Posterior vena cava (tissue), 2 donors: ENCODE measurements at regions of chr10 and their contacts with region 1.

Region 1: DNA sequence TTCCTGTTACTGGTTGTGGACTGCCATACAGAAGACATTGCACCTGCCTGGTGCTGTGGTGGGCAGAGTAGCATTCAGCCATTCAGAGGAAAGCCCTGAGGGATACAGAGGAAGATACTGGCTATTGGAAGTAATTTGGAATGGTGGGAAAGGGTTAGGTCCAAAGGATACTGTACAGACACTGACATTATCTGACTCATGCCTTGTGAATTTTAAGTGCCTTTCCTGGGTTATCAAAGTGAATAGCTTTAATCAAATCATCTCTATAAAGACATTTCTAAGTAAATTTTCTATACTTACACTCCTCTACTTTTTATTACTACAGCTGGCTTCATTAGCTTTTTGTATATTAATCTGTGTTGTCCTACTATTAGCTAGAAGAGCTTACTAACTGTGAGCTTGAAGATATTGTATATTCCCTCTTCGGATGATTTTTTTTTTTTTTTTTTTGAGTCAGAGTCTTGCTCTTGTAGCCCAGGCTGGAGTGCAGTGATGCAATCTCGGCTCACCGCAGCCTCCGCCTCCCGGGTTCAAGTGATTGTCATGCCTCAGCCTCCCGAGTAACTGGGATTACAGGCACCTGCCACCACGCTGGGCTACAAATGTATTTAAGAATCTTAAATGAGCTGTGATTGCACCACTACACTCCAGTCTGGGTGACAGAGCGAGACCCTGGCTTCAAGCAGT is 186.5 kb downstream of the ADK start:
- DNase-seq: no peak

Region 2: DNA sequence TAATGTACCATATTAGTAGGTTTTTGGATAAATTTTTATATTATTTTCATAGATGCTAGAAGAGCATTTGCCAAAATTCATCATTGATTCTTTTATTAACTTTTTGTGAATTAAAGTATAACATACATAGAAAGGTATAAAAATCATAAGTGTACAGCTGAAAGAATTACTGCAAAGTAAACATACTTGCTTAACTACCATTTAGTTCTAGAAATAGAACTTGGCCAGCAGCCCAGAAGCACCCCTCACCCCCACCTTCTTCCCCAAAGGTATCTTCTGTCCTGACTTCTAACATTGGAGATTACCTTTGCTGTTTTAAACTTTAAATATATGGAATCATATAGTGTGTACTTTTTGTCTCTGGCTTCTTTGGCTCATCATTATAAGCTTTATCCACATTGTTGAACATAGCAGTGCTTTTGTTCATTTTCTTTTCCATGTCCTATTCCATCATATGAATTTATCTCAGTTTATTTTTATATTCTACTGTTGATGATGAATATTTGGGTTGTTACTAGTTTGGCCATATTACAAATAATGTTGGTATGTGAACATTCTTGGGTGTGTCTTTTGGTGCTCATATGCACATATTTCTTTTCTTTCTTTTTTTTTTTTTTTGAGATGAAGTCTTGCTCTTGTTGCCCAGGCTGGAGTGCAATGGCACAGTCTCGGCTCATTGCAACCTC is 43.6 kb before region 1 on chr10:
- intact Hi-C with region 1: no loop called
- DNase-seq: no peak

Region 3: GRCh38 chr10:74347522-74347921 is 10.0 kb after region 1 on chr10:
- intact Hi-C with region 1: loop called in 1 of 2 experiments (anchors 1 kb)
- DNase-seq: no peak